T-cell (primary cell): ENCODE measurements at regions of chr4 and their contacts with region 1.

Region 1: DNA sequence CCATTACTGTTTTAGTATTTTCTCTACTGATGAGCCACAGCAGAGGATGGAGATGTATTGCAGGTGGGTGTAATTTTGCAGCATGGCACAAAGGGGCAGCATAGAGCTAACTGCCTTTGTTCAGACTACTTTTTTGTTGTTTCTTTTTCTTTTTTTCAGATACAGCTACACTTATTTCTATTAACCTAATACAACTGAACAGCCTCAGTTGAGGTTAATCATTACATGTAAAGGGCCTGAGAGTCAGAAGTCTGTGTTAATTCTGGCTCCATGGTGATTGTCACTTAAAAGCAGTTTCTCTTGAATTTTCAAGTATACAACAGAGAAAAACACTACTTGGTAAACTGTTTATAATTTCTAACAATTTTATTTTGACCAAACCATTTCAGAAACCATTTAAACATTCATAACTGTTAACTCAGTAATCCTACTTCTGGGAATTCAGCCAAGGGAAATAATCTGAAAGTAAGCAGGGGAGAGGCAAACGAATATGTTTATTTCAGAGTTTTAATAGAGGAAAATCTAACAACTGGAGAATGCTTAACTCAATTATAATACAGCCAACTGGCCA is 13.9 kb upstream of the PPEF2 start:
- DNase-seq: peak in 17 of 35 experiments; percentile 5 to 62 (median 10)
- ATAC-seq: peak; percentile 57 to 64 (median 60)
- H3K4me3 ChIP-seq: no peak overlapping the region
- H3K4me3 Mint-ChIP-seq: no peak overlapping the region
- H3K27ac ChIP-seq: no peak overlapping the region
- H3K27ac Mint-ChIP-seq: no peak overlapping the region
- H3K4me1 ChIP-seq: no peaks in the 10 kb centered on the region
- H3K4me1 Mint-ChIP-seq: no peaks in the 10 kb centered on the region
- H3K27me3 ChIP-seq: no peaks in the 10 kb centered on the region
- H3K27me3 Mint-ChIP-seq: no peaks in the 10 kb centered on the region

Region 2: GRCh38 chr4:75895744-75896314 is 20.3 kb before region 1 on chr4:
- CTCF ChIA-PET with region 1: interaction called, 4 to 12 read pairs
- POLR2A ChIA-PET with region 1: interaction called in 1 of 2 experiments, 4 read pairs
- DNase-seq: peak in 4 of 35 experiments; percentile 1 to 72 (median 8)
- ATAC-seq: peak in 2 of 4 experiments; percentile 56 to 57
- H3K4me3 ChIP-seq: no peak overlapping the region
- H3K4me3 Mint-ChIP-seq: no peak overlapping the region
- H3K27ac ChIP-seq: no peak overlapping the region
- H3K27ac Mint-ChIP-seq: no peak overlapping the region
- H3K4me1 ChIP-seq: no peaks in the 10 kb centered on the region
- H3K4me1 Mint-ChIP-seq: no peaks in the 10 kb centered on the region
- H3K27me3 ChIP-seq: no peaks in the 10 kb centered on the region
- H3K27me3 Mint-ChIP-seq: no peaks in the 10 kb centered on the region

Region 3: DNA sequence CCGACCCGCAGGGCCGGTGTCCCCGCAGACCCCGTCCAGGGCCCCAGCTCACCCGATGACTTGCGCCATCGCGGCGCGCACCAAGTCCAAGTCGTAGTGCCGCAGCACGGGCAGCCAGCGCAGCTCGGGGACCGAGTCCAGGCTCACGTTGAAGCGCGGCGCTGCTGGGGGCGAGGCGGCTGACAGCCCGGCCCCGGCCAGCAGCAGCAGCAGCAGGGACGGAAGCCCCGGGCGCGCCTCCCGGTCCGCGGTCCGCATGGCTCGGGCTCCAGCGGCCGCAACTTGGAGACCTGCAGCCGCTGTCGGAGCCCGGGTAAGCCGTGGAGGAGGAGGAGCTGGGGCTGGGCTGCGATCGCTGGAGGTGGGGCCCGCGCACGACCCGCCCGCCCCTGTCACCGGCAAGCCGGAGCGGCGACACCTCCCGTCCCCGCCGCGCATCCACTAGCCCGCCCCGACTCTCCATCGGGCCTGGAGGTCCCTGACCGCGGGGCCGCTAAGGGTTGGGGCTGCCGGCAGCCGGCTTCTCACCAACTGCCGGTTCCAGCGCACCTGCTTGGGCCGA is 24.6 kb after region 1 on chr4 and contains the start of gene NAAA:
- CTCF ChIA-PET with region 1: interaction called, 8 to 22 read pairs
- POLR2A ChIA-PET with region 1: no interaction called
- DNase-seq: peak; percentile 49 to 89 (median 73)
- ATAC-seq: peak; percentile 82 to 88 (median 84)
- H3K4me3 ChIP-seq: peak within 1 kb of the TSS; percentile 95 to 97
- H3K4me3 Mint-ChIP-seq: peak within 1 kb of the TSS; percentile 97 to 98 (median 98)
- H3K27ac ChIP-seq: peak within 1 kb of the TSS; percentile 87
- H3K27ac Mint-ChIP-seq: peak within 1 kb of the TSS; percentile 96
- H3K4me1 ChIP-seq: peaks cover 0 to 17% of the 10 kb centered on the region in 2 experiments
- H3K4me1 Mint-ChIP-seq: peaks cover 22 to 24% (median 23%) of the 10 kb centered on the region in 3 donors
- H3K27me3 ChIP-seq: no peaks in the 10 kb centered on the region
- H3K27me3 Mint-ChIP-seq: no peaks in the 10 kb centered on the region
- total RNA-seq, gene NAAA: 51.7 to 82.4 (median 73.5) TPM

Region 4: DNA sequence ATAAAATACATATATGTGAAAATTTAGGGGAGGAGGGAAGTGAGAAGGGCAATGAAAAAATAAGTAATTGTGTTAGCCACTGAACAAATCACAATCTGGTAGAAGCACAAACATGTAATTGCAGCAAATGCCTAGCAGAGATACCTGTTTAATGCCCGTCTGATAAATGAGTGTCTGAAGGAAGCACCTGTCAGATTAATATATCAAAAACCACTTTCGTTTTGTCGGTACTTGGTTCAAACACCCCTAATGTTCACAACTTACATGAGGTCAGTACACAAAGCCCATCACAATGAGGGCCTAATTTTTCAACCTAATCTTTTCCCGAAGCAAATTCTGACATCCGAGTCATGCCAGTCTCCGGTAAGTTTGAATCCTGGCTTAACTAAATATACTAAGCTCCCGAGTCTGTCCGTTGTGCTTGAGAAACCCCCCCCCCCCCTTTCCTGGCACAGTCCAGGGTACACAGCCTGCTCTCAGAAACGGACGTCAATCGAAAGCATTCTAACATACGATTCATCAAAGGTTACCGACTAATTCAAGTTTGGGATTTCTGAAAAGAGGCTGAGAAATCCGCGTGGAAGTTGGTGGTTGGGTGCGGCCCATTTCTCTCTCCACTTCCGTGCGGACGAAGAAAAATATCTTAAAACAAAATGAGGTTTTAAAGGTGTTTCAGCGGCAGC is 73.8 kb after region 1 on chr4:
- CTCF ChIA-PET with region 1: no interaction called
- POLR2A ChIA-PET with region 1: no interaction called
- DNase-seq: peak in 2 of 35 experiments; percentile 1 to 23
- ATAC-seq: no peak
- H3K4me3 ChIP-seq: peak overlapping the region; percentile 76 to 98
- H3K4me3 Mint-ChIP-seq: peak overlapping the region; percentile 93 to 96 (median 94)
- H3K27ac ChIP-seq: peak overlapping the region; percentile 30
- H3K27ac Mint-ChIP-seq: peak overlapping the region; percentile 83 to 91
- H3K4me1 ChIP-seq: peaks cover 14 to 23% of the 10 kb centered on the region in 2 experiments
- H3K4me1 Mint-ChIP-seq: peaks cover 7 to 39% (median 8%) of the 10 kb centered on the region in 3 donors
- H3K27me3 ChIP-seq: peaks cover 2% of the 10 kb centered on the region in 2 experiments
- H3K27me3 Mint-ChIP-seq: peaks cover 0 to 2% of the 10 kb centered on the region in 2 donors